T-cell (primary cell): ENCODE measurements at regions of chr1 and their contacts with region 1.

Region 1: DNA sequence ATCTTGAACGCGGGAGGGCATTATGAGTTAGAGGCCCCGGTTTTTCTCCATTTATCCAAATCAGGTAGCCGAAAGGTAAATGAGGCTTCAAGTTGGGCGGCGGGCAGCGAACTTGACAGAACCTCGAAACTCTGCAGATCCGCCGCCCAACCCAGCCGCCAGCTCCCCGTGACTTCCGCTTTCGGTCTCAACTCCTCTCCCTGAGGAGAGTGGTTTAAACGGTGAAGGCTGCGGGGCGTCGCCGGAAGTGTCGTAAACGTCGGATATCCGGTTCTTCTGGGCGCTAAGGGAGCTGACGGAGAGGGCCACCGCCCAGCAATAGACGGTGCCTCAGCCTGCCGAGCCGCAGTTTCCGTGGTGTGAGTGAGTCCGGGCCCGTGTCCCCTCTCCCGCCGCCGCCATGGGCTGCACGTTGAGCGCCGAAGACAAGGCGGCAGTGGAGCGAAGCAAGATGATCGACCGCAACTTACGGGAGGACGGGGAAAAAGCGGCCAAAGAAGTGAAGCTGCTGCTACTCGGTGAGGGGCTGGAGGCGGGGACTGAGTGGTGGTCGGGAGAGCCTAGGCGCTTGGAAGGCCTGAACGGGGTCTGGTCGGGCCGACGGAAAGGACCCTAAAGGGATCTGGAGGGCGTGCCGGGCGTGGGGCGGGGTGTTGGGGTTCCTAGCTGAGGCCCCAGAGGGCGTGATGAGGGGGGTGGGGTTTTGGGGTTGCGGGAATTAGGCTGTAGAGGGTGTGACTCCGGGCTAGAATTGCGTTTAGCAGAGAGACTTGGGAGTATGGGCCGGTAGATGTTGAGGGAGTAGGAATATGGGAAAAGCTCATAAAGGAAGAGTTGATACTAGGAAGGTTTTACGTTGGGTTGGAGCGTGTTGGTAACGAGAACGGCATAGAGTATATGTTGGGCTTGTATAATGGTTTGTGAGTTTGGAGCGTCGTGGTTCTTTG is at the start of gene GNAI3:
- DNase-seq: peak; percentile 89 to 99 (median 96)
- ATAC-seq: peak; percentile 93 to 95 (median 94)
- H3K4me3 ChIP-seq: peak within 1 kb of the TSS; percentile 83 to 93
- H3K4me3 Mint-ChIP-seq: peak within 1 kb of the TSS; percentile 90 to 99 (median 95)
- H3K27ac ChIP-seq: peak within 1 kb of the TSS; percentile 80
- H3K27ac Mint-ChIP-seq: peak within 1 kb of the TSS; percentile 98 to 99
- H3K4me1 ChIP-seq: peaks cover 7 to 30% of the 10 kb centered on the region in 2 experiments
- H3K4me1 Mint-ChIP-seq: peaks cover 59 to 63% (median 61%) of the 10 kb centered on the region in 3 donors
- H3K27me3 ChIP-seq: no peaks in the 10 kb centered on the region
- H3K27me3 Mint-ChIP-seq: no peaks in the 10 kb centered on the region
- total RNA-seq, gene GNAI3: 5.4 to 7.2 (median 6.5) TPM

Region 2: DNA sequence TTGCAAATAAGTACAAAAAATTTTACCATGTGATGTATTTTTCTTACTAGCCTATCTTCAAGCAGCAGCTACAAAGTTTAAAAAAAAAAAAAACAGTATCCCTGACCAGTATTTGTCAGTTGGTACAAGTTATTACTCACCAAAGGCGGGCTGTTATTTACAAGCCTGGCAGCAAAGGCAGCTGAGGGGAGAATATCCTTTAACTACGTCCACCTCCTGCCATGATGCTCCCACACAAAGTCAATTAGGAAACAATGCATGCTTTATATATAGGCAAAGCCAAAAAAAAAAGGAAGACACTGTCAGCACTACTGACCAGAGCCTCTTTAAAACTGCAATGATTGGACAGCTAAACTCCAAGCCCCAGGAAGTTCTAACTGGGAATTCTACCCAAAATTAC is 136.0 kb before region 1 on chr1:
- CTCF ChIA-PET with region 1: no interaction called
- POLR2A ChIA-PET with region 1: no interaction called
- DNase-seq: no peak
- ATAC-seq: no peak
- H3K4me3 ChIP-seq: no peak overlapping the region
- H3K4me3 Mint-ChIP-seq: no peak overlapping the region
- H3K27ac ChIP-seq: no peak overlapping the region
- H3K27ac Mint-ChIP-seq: no peak overlapping the region
- H3K4me1 ChIP-seq: no peaks in the 10 kb centered on the region
- H3K4me1 Mint-ChIP-seq: peaks cover 45 to 51% (median 48%) of the 10 kb centered on the region in 3 donors
- H3K27me3 ChIP-seq: no peaks in the 10 kb centered on the region
- H3K27me3 Mint-ChIP-seq: no peaks in the 10 kb centered on the region

Region 3: GRCh38 chr1:109472779-109473178 is 75.8 kb before region 1 on chr1:
- CTCF ChIA-PET with region 1: no interaction called
- POLR2A ChIA-PET with region 1: interaction called in 1 of 2 experiments, 12 read pairs
- DNase-seq: no peak
- ATAC-seq: no peak
- H3K4me3 ChIP-seq: no peak overlapping the region
- H3K4me3 Mint-ChIP-seq: no peak overlapping the region
- H3K27ac ChIP-seq: no peak overlapping the region
- H3K27ac Mint-ChIP-seq: no peak overlapping the region
- H3K4me1 ChIP-seq: peaks cover 0 to 1% of the 10 kb centered on the region in 2 experiments
- H3K4me1 Mint-ChIP-seq: peaks cover 0 to 4% (median 2%) of the 10 kb centered on the region in 3 donors
- H3K27me3 ChIP-seq: peaks cover 13 to 59% of the 10 kb centered on the region in 2 experiments
- H3K27me3 Mint-ChIP-seq: peaks cover 44 to 56% of the 10 kb centered on the region in 2 donors

Region 4: GRCh38 chr1:109483672-109484518 is 64.7 kb before region 1 on chr1 and contains the start of gene ATXN7L2:
- CTCF ChIA-PET with region 1: interaction called, 4 to 13 read pairs
- POLR2A ChIA-PET with region 1: interaction called in 1 of 2 experiments, 3 read pairs
- DNase-seq: peak; percentile 82 to 97 (median 92)
- ATAC-seq: peak; percentile 79 to 86 (median 84)
- H3K4me3 ChIP-seq: peak within 1 kb of the TSS; percentile 80 to 84
- H3K4me3 Mint-ChIP-seq: peak within 1 kb of the TSS; percentile 92 to 96 (median 92)
- H3K27ac ChIP-seq: peak within 1 kb of the TSS; percentile 86
- H3K27ac Mint-ChIP-seq: peak within 1 kb of the TSS; percentile 92 to 93
- H3K4me1 ChIP-seq: peaks cover 12 to 24% of the 10 kb centered on the region in 2 experiments
- H3K4me1 Mint-ChIP-seq: peaks cover 32 to 37% (median 35%) of the 10 kb centered on the region in 3 donors
- H3K27me3 ChIP-seq: peaks cover 0 to 6% of the 10 kb centered on the region in 2 experiments
- H3K27me3 Mint-ChIP-seq: peaks cover under 1 to 12% of the 10 kb centered on the region in 2 donors
- total RNA-seq, gene ATXN7L2: 9.7 to 13.2 (median 12.5) TPM

Region 5: GRCh38 chr1:109493805-109494539 is 54.6 kb before region 1 on chr1 and contains the start of gene CYB561D1:
- CTCF ChIA-PET with region 1: interaction called in 1 of 2 experiments, 15 read pairs
- POLR2A ChIA-PET with region 1: interaction called in 1 of 2 experiments, 3 read pairs
- DNase-seq: peak; percentile 75 to 93 (median 86)
- ATAC-seq: peak; percentile 89 to 95 (median 92)
- H3K4me3 ChIP-seq: peak within 1 kb of the TSS; percentile 85 to 91
- H3K4me3 Mint-ChIP-seq: peak within 1 kb of the TSS; percentile 90 to 96 (median 94)
- H3K27ac ChIP-seq: no peak within 1 kb of the TSS
- H3K27ac Mint-ChIP-seq: peak within 1 kb of the TSS; percentile 79 to 97
- H3K4me1 ChIP-seq: peaks cover 27 to 68% of the 10 kb centered on the region in 2 experiments
- H3K4me1 Mint-ChIP-seq: peaks cover 48 to 59% (median 59%) of the 10 kb centered on the region in 3 donors
- H3K27me3 ChIP-seq: no peaks in the 10 kb centered on the region
- H3K27me3 Mint-ChIP-seq: no peaks in the 10 kb centered on the region
- total RNA-seq, gene CYB561D1: 23.6 to 42.6 (median 39.5) TPM

Region 6: DNA sequence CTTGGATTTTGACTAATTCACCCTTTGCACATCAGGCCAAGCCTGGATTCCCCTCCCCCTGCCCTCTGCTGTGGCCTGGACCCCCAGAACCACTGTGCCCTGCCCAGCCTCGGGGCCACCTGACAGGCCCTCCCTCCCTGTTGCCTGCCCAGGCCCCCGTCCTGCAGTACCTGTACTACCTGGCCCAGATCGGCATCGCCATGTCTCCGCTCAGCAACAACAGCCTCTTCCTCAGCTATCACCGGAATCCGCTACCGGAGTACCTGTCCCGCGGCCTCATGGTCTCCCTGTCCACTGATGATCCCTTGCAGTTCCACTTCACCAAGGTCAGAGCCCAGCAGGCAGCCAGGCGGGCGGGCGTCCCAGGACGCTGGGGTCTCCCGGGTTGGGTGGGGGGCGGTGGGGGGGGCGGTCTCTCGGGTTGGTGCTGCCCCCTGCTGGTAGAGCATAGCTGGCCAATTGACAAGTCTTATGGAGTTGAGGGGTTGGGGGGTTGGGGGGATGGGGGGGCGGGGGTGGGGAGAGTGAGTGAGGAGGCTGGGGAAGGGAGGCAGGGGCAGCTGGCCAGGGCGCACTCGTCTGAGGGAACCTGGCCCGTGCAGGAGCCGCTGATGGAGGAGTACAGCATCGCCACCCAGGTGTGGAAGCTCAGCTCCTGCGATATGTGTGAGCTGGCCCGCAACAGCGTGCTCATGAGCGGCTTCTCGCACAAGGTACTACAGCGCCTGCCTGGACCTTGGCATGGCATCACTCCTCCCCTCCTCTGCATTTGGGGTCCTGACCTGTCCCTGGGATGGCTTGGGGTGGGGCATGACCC is 81.7 kb after region 1 on chr1:
- CTCF ChIA-PET with region 1: interaction called, 5 to 46 read pairs
- POLR2A ChIA-PET with region 1: interaction called, 3 read pairs
- DNase-seq: peak in 16 of 35 experiments; percentile 28 to 66 (median 36)
- ATAC-seq: peak in 3 of 4 experiments; percentile 9 to 51 (median 16)
- H3K4me3 ChIP-seq: no peak overlapping the region
- H3K4me3 Mint-ChIP-seq: no peak overlapping the region
- H3K27ac ChIP-seq: no peak overlapping the region
- H3K27ac Mint-ChIP-seq: no peak overlapping the region
- H3K4me1 ChIP-seq: peaks cover 4 to 13% of the 10 kb centered on the region in 2 experiments
- H3K4me1 Mint-ChIP-seq: peaks cover 11 to 21% (median 19%) of the 10 kb centered on the region in 3 donors
- H3K27me3 ChIP-seq: no peaks in the 10 kb centered on the region
- H3K27me3 Mint-ChIP-seq: no peaks in the 10 kb centered on the region

Region 7: GRCh38 chr1:109640285-109640865 is 91.8 kb after region 1 on chr1:
- CTCF ChIA-PET with region 1: interaction called, 8 to 46 read pairs
- POLR2A ChIA-PET with region 1: interaction called, 3 to 5 read pairs
- DNase-seq: peak; percentile 58 to 95 (median 85)
- ATAC-seq: peak; percentile 70 to 87 (median 74)
- H3K4me3 ChIP-seq: no peak overlapping the region
- H3K4me3 Mint-ChIP-seq: no peak overlapping the region
- H3K27ac ChIP-seq: no peak overlapping the region
- H3K27ac Mint-ChIP-seq: peak overlapping the region in 1 of 2 donors; percentile 57
- H3K4me1 ChIP-seq: peaks cover 0 to 20% of the 10 kb centered on the region in 2 experiments
- H3K4me1 Mint-ChIP-seq: peaks cover 6 to 17% (median 14%) of the 10 kb centered on the region in 3 donors
- H3K27me3 ChIP-seq: peaks cover 0 to 23% of the 10 kb centered on the region in 2 experiments
- H3K27me3 Mint-ChIP-seq: no peaks in the 10 kb centered on the region

Region 8: GRCh38 chr1:109773146-109773899 is 224.7 kb after region 1 on chr1:
- CTCF ChIA-PET with region 1: interaction called, 8 to 26 read pairs
- POLR2A ChIA-PET with region 1: no interaction called
- DNase-seq: peak; percentile 37 to 82 (median 60)
- ATAC-seq: peak; percentile 83 to 94 (median 86)
- H3K4me3 ChIP-seq: no peak overlapping the region
- H3K4me3 Mint-ChIP-seq: no peak overlapping the region
- H3K27ac ChIP-seq: no peak overlapping the region
- H3K27ac Mint-ChIP-seq: no peak overlapping the region
- H3K4me1 ChIP-seq: peaks cover 0 to 18% of the 10 kb centered on the region in 2 experiments
- H3K4me1 Mint-ChIP-seq: peaks cover 7 to 16% (median 9%) of the 10 kb centered on the region in 3 donors
- H3K27me3 ChIP-seq: peaks cover 0 to 20% of the 10 kb centered on the region in 2 experiments
- H3K27me3 Mint-ChIP-seq: no peaks in the 10 kb centered on the region

Region 9: DNA sequence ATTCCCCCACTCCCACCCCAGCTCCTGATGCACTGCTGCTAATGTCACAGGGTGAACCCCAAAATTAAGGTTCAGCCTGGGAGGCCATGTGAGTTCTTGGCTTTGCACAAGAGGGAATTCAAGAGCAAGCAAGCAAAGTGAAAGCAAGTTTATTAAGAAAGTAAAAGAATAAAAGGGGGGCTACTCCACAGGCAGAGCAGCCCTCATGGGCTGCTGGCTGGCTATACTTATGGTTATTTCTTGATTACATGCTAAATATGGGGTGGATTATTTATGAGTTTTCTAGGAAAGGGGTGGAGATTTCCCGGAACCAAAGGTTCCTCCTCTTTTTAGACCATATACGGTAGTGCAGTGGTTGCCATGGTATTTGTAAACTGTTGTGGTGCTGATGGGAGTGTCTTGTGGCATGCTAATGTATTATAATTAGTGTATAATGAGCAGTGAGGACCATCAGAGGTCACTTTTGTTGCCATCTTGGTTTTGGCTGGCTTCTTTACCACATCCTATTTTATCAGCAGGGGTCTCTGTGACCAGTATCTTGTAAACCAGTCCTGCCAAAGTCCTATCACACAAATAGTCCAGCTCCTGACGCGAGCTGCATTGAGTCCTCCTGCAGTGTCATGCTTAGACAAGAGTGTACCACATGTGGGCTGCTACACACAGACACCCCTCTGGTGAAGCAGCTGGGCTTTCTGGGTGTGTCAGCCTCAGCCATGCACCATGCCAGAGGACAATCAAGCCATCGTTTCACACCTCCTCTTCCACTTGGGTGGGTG is 315.6 kb after region 1 on chr1:
- CTCF ChIA-PET with region 1: no interaction called
- POLR2A ChIA-PET with region 1: no interaction called
- DNase-seq: peak in 3 of 35 experiments; percentile 3 to 21 (median 12)
- ATAC-seq: peak in 1 of 4 experiments; percentile 35
- H3K4me3 ChIP-seq: no peak overlapping the region
- H3K4me3 Mint-ChIP-seq: no peak overlapping the region
- H3K27ac ChIP-seq: no peak overlapping the region
- H3K27ac Mint-ChIP-seq: peak overlapping the region in 1 of 2 donors; percentile 38
- H3K4me1 ChIP-seq: peaks cover 0 to 4% of the 10 kb centered on the region in 2 experiments
- H3K4me1 Mint-ChIP-seq: peaks cover 8 to 12% (median 12%) of the 10 kb centered on the region in 3 donors
- H3K27me3 ChIP-seq: no peaks in the 10 kb centered on the region
- H3K27me3 Mint-ChIP-seq: no peaks in the 10 kb centered on the region